CD4-positive, alpha-beta T cell (primary cell): ENCODE measurements at regions of chr12 and their contacts with region 1.

Region 1: GRCh38 chr12:95858479-95859343 is at the start of gene SNRPF:
- DNase-seq: peak; percentile 84 to 97 (median 91)
- ATAC-seq: peak; percentile 93
- H3K4me3 ChIP-seq: peak within 1 kb of the TSS; percentile 83
- H3K4me3 Mint-ChIP-seq: no peak within 1 kb of the TSS
- H3K27ac ChIP-seq: peak within 1 kb of the TSS; percentile 49 to 89
- H3K27ac Mint-ChIP-seq: no peak within 1 kb of the TSS
- H3K4me1 ChIP-seq: peaks cover 26% of the 10 kb centered on the region
- H3K4me1 Mint-ChIP-seq: peaks cover 12% of the 10 kb centered on the region
- H3K27me3 ChIP-seq: no peaks in the 10 kb centered on the region
- H3K27me3 Mint-ChIP-seq: peaks cover 4% of the 10 kb centered on the region
- CTCF ChIP-seq: no peak
- total RNA-seq, gene SNRPF: 40.9 to 44.0 TPM

Region 2: GRCh38 chr12:94459728-94460615 is 1398.7 kb before region 1 on chr12 and contains the start of gene CEP83:
- CTCF ChIA-PET with region 1: no interaction called
- POLR2A ChIA-PET with region 1: no interaction called
- intact Hi-C with region 1: loop called in 1 of 2 experiments (anchors 10 kb)
- DNase-seq: peak; percentile 89 to 99 (median 98)
- ATAC-seq: peak; percentile 97
- H3K4me3 ChIP-seq: peak within 1 kb of the TSS; percentile 96
- H3K4me3 Mint-ChIP-seq: peak within 1 kb of the TSS; percentile 94
- H3K27ac ChIP-seq: peak within 1 kb of the TSS; percentile 69 to 87
- H3K27ac Mint-ChIP-seq: peak within 1 kb of the TSS; percentile 92
- H3K4me1 ChIP-seq: peaks cover 10% of the 10 kb centered on the region
- H3K4me1 Mint-ChIP-seq: peaks cover 31% of the 10 kb centered on the region
- H3K27me3 ChIP-seq: no peaks in the 10 kb centered on the region
- H3K27me3 Mint-ChIP-seq: peaks cover 8% of the 10 kb centered on the region
- CTCF ChIP-seq: no peak
- total RNA-seq, gene CEP83: 9.4 to 12.1 TPM

Region 3: DNA sequence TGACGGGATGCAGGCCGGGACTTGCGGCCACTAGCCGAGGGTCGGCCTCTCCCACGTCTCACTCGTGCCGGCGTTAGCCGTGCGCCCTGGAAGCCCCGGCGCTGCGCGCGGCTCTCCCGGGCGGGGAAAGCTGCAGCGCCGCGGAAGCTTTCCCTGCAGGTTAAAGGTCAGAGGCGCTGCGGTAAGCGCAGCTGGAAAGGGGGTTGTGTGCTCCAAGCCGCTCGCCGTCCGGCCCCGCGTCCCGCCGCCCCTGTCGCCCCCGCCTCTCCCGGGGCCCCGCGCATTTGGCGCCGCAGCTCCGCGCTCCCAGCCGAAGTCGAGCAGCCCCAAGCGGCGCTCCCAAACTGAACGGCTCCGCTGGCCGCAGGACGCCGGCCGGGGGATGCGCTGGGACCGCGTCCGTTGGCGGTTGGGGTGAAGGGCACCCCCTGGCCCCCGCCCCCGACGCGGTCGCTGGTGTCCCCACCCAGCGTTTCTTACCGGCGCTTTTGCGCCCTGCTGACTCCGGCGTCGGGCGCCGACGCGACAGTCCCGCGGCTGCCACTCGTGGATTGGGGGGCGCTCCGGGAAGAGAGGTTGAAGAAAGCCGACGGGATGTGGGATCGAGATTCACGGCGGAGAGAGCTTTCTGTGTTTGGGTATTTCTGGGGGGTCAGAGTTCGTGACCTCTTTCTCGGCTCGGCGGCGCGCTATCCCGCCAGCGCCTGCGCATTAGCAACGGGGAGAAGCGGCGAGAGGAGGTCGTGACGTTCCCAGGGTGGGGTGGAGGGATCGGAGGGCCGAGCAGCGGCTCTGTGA is 785.6 kb before region 1 on chr12 and contains the start of gene NR2C1:
- CTCF ChIA-PET with region 1: no interaction called
- POLR2A ChIA-PET with region 1: no interaction called
- intact Hi-C with region 1: loop called in 1 of 2 experiments (anchors 5 kb)
- DNase-seq: peak; percentile 85 to 97 (median 90)
- ATAC-seq: peak; percentile 98
- H3K4me3 ChIP-seq: peak within 1 kb of the TSS; percentile 84
- H3K4me3 Mint-ChIP-seq: peak within 1 kb of the TSS; percentile 98
- H3K27ac ChIP-seq: peak within 1 kb of the TSS; percentile 62 to 72
- H3K27ac Mint-ChIP-seq: peak within 1 kb of the TSS; percentile 89
- H3K4me1 ChIP-seq: peaks cover 17% of the 10 kb centered on the region
- H3K4me1 Mint-ChIP-seq: peaks cover 23% of the 10 kb centered on the region
- H3K27me3 ChIP-seq: no peaks in the 10 kb centered on the region
- H3K27me3 Mint-ChIP-seq: no peaks in the 10 kb centered on the region
- CTCF ChIP-seq: no peak
- total RNA-seq, gene NR2C1: 48.3 to 58.9 TPM

Region 4: DNA sequence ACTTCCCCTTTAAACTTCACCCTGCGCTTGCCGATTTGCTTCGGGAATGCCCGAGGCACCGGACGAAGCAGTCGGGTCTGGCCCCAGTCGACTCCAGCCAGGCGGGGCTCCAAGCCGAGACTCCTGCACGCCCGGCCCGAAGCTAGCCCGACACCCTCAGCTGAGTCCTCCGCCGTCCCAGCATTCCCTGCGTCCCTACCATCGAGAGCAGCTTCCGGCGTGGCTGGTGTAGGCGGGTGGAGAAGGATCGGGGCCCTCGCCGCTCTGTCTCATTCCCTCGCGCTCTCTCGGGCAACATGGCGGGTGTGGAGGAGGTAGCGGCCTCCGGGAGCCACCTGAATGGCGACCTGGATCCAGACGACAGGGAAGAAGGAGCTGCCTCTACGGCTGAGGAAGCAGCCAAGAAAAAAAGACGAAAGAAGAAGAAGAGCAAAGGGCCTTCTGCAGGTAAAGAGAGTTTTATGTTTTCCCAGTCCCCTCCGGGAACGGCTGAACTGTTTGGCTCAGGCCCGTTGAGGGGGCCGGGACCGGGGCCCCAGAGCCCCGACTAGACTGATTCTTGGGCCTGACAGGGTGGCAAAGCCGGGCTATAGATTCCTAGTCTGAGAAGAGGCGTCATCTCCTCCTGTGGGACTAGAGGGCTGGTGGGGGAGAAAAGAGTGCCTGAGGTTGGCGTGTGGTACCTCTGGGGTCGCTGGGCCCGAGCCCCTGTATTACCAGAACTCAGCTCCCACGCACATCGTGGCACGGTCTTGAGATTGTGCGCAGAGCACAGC is 384.6 kb before region 1 on chr12 and contains the start of gene METAP2:
- CTCF ChIA-PET with region 1: no interaction called
- POLR2A ChIA-PET with region 1: no interaction called
- intact Hi-C with region 1: loop called in 1 of 2 experiments (anchors 5 kb)
- DNase-seq: peak; percentile 82 to 95 (median 88)
- ATAC-seq: peak; percentile 96
- H3K4me3 ChIP-seq: peak within 1 kb of the TSS; percentile 92
- H3K4me3 Mint-ChIP-seq: peak within 1 kb of the TSS; percentile 100
- H3K27ac ChIP-seq: peak within 1 kb of the TSS; percentile 56 to 79
- H3K27ac Mint-ChIP-seq: peak within 1 kb of the TSS; percentile 92
- H3K4me1 ChIP-seq: peaks cover 32% of the 10 kb centered on the region
- H3K4me1 Mint-ChIP-seq: peaks cover 67% of the 10 kb centered on the region
- H3K27me3 ChIP-seq: no peaks in the 10 kb centered on the region
- H3K27me3 Mint-ChIP-seq: no peaks in the 10 kb centered on the region
- CTCF ChIP-seq: no peak
- total RNA-seq, gene METAP2: 60.2 to 66.3 TPM

Region 5: DNA sequence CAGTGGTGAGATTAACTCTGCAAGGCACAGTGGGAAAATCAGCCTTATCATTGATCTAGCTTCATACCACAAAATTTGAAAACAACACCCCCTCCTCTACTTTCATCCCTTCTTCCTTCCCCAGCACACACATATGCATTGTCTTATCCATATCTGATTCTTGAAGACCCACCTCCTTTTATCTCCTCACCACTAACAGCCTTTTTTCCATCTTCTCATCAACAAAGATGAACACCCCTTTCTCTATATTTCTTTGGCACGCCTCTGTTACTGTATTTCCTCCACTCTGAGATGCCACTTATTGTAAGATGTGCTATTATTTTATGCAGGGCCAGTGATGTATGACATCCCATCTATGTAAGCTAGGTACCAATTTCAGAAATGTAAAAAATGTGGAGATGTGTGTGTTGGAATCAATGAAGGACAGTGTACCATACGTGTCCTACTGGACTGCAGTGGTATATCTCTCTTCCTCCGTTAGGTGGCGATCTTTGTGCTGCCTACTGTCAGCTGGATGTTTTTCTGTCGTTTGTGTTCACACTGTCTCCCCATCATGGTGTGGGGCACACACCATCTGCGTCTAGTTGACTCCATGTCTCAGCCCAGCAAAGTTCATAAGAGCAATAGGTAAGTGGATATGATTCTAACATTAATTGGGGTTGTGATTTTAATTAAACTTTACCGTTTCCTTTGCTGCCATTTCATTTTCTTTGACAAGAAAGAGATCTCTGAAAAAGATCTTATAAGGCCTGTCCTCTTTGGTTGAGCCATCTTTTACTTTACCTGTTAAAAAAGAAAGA is 59.7 kb after region 1 on chr12:
- CTCF ChIA-PET with region 1: no interaction called
- POLR2A ChIA-PET with region 1: no interaction called
- intact Hi-C with region 1: no loop called
- DNase-seq: peak in 13 of 14 experiments; percentile 5 to 79 (median 22)
- ATAC-seq: peak; percentile 97
- H3K4me3 ChIP-seq: no peak overlapping the region
- H3K4me3 Mint-ChIP-seq: no peak overlapping the region
- H3K27ac ChIP-seq: no peak overlapping the region
- H3K27ac Mint-ChIP-seq: no peak overlapping the region
- H3K4me1 ChIP-seq: no peaks in the 10 kb centered on the region
- H3K4me1 Mint-ChIP-seq: no peaks in the 10 kb centered on the region
- H3K27me3 ChIP-seq: no peaks in the 10 kb centered on the region
- H3K27me3 Mint-ChIP-seq: peaks cover under 1% of the 10 kb centered on the region
- CTCF ChIP-seq: peak; percentile 86

Region 6: DNA sequence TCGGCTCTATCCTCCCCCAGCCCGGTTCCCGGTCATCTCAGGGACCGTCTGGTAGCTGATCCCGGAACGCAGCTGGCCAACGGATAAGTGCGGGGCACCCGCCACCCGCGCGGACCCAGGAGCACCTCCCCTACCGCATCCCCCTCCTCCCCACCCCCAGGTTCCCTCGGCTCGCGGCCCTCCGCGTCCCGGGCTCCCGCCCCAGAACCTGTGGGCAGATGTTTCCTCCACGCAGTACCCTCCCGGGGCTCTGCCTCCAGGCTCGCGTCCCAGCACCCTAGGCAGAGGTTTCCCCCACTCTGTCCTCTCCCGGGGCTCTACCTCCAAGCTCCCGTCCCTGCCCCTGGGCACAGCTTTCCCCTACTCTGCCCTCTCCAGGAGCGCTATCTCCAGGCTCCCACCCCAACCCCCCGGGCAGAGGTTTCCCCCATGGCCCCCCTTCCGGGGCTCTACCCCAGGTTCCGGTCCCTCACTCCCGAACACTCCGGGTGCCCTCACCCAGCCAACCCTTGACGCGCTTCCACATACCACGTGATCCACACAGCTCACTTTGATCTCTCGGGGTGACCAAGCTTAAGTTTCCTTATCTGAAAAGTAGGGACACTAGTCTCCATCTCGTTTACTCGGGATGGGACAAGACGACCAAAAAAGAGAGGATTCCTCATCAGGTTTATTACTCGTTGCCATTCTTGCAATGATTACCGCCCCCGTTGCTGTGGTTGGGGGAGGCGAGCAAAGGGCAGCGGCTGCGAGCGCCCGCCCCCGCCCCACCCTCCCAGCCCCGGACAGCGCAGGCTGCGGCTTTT is 84.0 kb after region 1 on chr12 and contains the start of gene CCDC38:
- CTCF ChIA-PET with region 1: no interaction called
- POLR2A ChIA-PET with region 1: interaction called, 11 read pairs
- intact Hi-C with region 1: loop called (anchors 5 kb)
- DNase-seq: peak; percentile 70 to 92 (median 79)
- ATAC-seq: peak; percentile 94
- H3K4me3 ChIP-seq: peak within 1 kb of the TSS; percentile 84
- H3K4me3 Mint-ChIP-seq: peak within 1 kb of the TSS; percentile 97
- H3K27ac ChIP-seq: peak within 1 kb of the TSS; percentile 61 to 76
- H3K27ac Mint-ChIP-seq: peak within 1 kb of the TSS; percentile 88
- H3K4me1 ChIP-seq: peaks cover 14% of the 10 kb centered on the region
- H3K4me1 Mint-ChIP-seq: peaks cover 10% of the 10 kb centered on the region
- H3K27me3 ChIP-seq: no peaks in the 10 kb centered on the region
- H3K27me3 Mint-ChIP-seq: no peaks in the 10 kb centered on the region
- CTCF ChIP-seq: no peak
- total RNA-seq, gene CCDC38: 0.11 TPM in 1 of 2 experiments, not detected in the other

Region 7: DNA sequence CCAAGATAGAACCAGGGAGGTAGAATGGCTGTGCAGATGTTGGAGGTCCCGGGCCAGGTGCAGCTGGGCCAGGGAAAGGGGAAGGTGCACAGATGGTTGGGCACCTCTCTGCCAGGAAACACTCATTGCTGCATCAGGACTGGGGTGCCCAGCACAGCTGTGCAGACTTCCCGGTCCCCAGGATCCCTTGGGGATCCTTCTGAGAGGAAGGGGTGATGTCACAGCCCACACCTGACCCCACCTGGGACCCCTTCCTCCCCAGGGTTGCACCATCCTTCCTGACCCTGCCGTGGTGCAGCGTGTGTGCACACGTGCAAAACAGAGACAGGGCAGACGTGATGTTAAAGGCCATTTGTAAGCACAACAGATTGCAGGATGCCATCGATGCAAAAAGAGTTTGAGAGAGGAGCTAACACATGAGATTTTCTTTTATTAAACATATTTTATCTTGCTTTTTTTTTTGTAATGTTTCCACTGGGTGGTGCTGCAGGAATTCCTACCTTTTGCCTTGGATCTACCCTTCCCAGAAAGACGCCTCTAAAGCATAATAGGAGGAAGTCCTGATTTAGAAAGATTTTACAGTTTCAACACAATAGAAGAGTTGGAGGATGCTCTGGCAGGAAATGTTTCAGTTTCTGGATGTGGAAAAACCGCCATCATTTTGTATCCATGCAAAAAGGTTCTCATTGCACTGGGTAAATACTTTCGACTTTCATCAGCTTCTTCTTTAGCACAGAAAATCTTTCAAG is 350.3 kb after region 1 on chr12:
- CTCF ChIA-PET with region 1: no interaction called
- POLR2A ChIA-PET with region 1: no interaction called
- intact Hi-C with region 1: loop called in 1 of 2 experiments (anchors 10 kb)
- DNase-seq: peak in 2 of 14 experiments; percentile 23 to 30
- ATAC-seq: no peak
- H3K4me3 ChIP-seq: peak overlapping the region; percentile 3
- H3K4me3 Mint-ChIP-seq: peak overlapping the region; percentile 87
- H3K27ac ChIP-seq: peak overlapping the region in 1 of 2 donors; percentile 46
- H3K27ac Mint-ChIP-seq: peak overlapping the region; percentile 82
- H3K4me1 ChIP-seq: peaks cover 87% of the 10 kb centered on the region
- H3K4me1 Mint-ChIP-seq: peaks cover 97% of the 10 kb centered on the region
- H3K27me3 ChIP-seq: no peaks in the 10 kb centered on the region
- H3K27me3 Mint-ChIP-seq: no peaks in the 10 kb centered on the region
- CTCF ChIP-seq: no peak

Region 8: DNA sequence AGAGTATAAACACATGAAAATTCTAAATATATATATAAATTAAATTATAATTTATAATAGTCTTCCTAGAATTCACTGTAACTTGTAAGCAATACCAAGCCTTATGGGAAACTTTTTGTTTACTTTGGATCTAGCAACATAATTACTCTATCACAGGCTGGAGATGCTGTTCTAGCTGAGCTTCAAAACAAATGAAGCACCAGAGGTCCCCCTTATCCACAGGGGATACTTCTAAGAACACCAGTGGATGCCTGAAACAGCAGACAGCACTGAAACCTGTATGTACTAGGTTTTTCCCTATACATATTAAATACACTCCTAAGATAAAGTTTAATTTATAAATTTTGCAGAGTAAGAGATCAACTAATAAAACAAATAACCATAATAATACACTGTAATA is 444.9 kb after region 1 on chr12:
- CTCF ChIA-PET with region 1: no interaction called
- POLR2A ChIA-PET with region 1: no interaction called
- intact Hi-C with region 1: no loop called
- DNase-seq: no peak
- ATAC-seq: no peak
- H3K4me3 ChIP-seq: no peak overlapping the region
- H3K4me3 Mint-ChIP-seq: no peak overlapping the region
- H3K27ac ChIP-seq: no peak overlapping the region
- H3K27ac Mint-ChIP-seq: no peak overlapping the region
- H3K4me1 ChIP-seq: no peaks in the 10 kb centered on the region
- H3K4me1 Mint-ChIP-seq: peaks cover 35% of the 10 kb centered on the region
- H3K27me3 ChIP-seq: no peaks in the 10 kb centered on the region
- H3K27me3 Mint-ChIP-seq: no peaks in the 10 kb centered on the region
- CTCF ChIP-seq: no peak

Region 9: GRCh38 chr12:96906849-96907670 is 1048.3 kb after region 1 on chr12 and contains the start of gene NEDD1:
- CTCF ChIA-PET with region 1: no interaction called
- POLR2A ChIA-PET with region 1: no interaction called
- intact Hi-C with region 1: loop called in 1 of 2 experiments (anchors 5 kb)
- DNase-seq: peak; percentile 66 to 90 (median 76)
- ATAC-seq: peak; percentile 69
- H3K4me3 ChIP-seq: peak within 1 kb of the TSS; percentile 93
- H3K4me3 Mint-ChIP-seq: peak within 1 kb of the TSS; percentile 99
- H3K27ac ChIP-seq: peak within 1 kb of the TSS; percentile 90 to 99
- H3K27ac Mint-ChIP-seq: peak within 1 kb of the TSS; percentile 98
- H3K4me1 ChIP-seq: peaks cover 22% of the 10 kb centered on the region
- H3K4me1 Mint-ChIP-seq: peaks cover 49% of the 10 kb centered on the region
- H3K27me3 ChIP-seq: no peaks in the 10 kb centered on the region
- H3K27me3 Mint-ChIP-seq: no peaks in the 10 kb centered on the region
- CTCF ChIP-seq: no peak
- total RNA-seq, gene NEDD1: 25.3 to 28.8 TPM